ENCODE measurements at regions of chr1 and their contacts with region 1.

Region 1: GRCh38 chr1:179809506-179810366 is 66.6 kb downstream of the FAM163A start:
- DNase-seq: peak; percentile 64
- H3K4me3 Mint-ChIP-seq: no peak overlapping the region
- H3K27ac Mint-ChIP-seq: no peak overlapping the region
- H3K4me1 Mint-ChIP-seq: peaks cover 3% of the 10 kb centered on the region
- H3K27me3 Mint-ChIP-seq: peaks cover 3% of the 10 kb centered on the region

Region 2: DNA sequence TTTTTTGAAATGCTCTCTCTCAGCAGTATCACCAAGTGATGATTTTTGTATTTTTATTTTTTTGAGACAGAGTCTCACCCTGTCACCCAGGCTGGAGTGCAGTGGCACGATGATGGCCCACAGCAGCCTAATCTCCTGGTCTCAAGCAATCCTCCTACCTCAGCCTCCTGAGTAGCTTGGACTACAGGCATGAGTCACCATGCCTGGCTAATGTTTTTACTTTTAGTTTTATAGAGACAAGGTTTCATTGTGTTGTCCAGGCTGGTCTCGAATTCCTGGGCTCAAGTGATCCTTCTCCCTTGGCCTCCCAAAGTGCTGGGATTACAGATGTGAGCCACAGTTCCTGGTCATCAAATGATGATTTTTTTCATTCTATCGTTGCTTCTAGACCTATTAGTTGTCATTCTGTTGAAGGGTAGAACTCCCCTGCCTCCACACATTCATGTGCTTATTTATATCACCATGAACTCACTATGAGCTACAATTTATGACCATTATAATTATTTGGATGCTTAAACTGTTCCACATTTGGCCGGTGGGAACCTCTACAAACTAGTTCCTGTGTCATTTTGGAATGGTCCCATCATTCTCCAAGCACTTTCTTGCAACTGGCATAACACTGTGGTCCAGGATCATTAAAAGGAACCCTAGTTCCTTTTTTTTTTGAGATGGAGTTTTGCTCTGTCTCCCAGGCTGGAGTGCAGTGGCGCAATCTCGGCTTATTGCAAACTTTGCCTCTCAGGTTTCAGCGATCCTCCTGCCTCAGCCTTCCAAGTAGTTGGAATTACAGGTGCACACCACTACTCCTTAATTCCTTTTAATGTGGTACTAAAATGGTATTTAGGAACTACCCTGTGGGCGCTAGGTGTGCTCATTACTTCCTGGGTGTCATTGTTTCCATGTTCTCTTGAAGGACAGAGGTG is 748.1 kb before region 1 on chr1:
- CTCF ChIA-PET with region 1: no interaction called
- POLR2A ChIA-PET with region 1: no interaction called
- DNase-seq: no peak
- H3K4me3 Mint-ChIP-seq: no peak overlapping the region
- H3K27ac Mint-ChIP-seq: no peak overlapping the region
- H3K4me1 Mint-ChIP-seq: no peaks in the 10 kb centered on the region
- H3K27me3 Mint-ChIP-seq: no peaks in the 10 kb centered on the region

Region 3: DNA sequence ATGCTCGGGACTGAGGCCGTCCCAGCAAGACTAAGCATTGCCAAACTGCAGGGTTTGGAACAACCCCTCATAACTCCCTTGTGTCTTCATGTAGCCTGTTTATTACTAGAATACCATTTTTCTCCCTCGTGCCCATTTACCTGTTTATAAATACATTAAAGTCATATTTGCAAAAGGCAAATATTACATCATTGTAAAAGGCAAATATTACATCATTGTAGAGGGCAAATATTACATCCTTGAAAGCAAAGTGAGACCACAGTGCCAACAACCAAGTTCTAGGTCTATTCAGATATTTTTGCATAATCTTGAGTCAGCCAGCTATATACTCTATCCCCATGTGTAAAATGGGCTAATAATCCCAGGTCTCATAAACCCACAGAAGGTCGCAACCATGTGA is 78.1 kb before region 1 on chr1:
- CTCF ChIA-PET with region 1: interaction called, 13 read pairs
- POLR2A ChIA-PET with region 1: no interaction called
- DNase-seq: no peak
- H3K4me3 Mint-ChIP-seq: no peak overlapping the region
- H3K27ac Mint-ChIP-seq: no peak overlapping the region
- H3K4me1 Mint-ChIP-seq: no peaks in the 10 kb centered on the region
- H3K27me3 Mint-ChIP-seq: peaks cover 17% of the 10 kb centered on the region

Region 4: DNA sequence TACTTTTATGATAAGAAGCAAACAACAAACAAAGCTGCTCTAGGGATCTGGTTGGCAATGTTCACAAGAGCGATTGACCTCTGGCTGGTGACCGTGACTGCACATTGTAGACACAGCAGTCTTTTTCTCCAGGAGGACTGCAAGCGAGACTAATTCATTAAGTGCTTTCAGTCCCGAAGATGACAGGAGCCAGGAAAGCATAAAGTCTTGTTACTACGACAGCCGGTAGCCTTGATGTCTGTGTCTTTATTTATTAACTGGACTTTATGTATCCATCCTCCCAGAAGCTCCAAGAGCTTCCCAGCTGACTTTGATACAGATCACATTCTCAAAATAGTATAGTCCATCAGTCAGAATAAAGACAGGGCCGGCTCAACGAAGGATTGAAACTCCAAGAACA is 48.4 kb before region 1 on chr1:
- CTCF ChIA-PET with region 1: interaction called, 16 read pairs
- POLR2A ChIA-PET with region 1: no interaction called
- DNase-seq: no peak
- H3K4me3 Mint-ChIP-seq: no peak overlapping the region
- H3K27ac Mint-ChIP-seq: no peak overlapping the region
- H3K4me1 Mint-ChIP-seq: no peaks in the 10 kb centered on the region
- H3K27me3 Mint-ChIP-seq: peaks cover 9% of the 10 kb centered on the region

Region 5: GRCh38 chr1:179794669-179795068 is 15.1 kb before region 1 on chr1:
- CTCF ChIA-PET with region 1: interaction called, 21 read pairs
- POLR2A ChIA-PET with region 1: no interaction called
- DNase-seq: no peak
- H3K4me3 Mint-ChIP-seq: no peak overlapping the region
- H3K27ac Mint-ChIP-seq: no peak overlapping the region
- H3K4me1 Mint-ChIP-seq: no peaks in the 10 kb centered on the region
- H3K27me3 Mint-ChIP-seq: no peaks in the 10 kb centered on the region

Region 6: DNA sequence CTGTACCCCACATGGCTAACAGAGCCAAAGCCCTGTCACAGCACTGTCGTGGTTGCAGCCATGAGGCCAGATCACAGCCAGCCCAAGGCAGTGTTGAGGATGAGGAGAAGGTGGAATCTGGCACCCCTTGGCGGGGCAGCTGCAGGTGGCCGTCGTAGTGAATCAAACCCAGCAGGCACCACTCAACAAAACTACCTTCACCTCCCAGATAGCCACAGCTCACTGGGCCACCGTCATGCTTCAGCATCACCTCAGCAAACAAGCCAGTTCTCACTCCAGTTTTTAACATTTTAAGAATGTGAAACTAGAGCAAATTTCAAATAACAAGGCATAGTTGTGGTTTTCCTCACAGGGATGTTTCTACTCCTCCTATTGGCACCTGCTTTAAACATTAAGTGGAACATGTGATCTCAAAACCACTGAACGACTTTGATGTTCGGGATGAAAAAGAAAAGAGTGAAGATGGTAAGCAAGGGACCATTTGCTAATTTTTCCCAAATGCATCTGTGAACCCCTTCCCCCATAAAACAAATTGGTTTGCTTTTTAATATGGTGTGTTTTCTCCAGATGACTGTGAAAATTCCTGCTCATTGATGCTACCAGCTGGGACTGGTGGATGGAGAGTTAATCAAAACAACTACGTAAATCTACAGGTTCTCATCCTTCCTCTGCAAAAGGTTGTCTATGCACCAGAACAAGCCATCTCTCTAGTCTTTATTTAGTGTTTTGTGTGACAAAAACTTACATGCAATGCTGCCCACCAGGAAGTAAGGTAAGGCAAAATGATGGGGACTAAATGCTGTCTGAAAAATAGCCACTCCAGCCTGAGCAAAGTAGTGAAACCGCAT is 22.3 kb after region 1 on chr1:
- CTCF ChIA-PET with region 1: interaction called, 33 read pairs
- POLR2A ChIA-PET with region 1: no interaction called
- DNase-seq: no peak
- H3K4me3 Mint-ChIP-seq: no peak overlapping the region
- H3K27ac Mint-ChIP-seq: peak overlapping the region; percentile 8
- H3K4me1 Mint-ChIP-seq: peaks cover 24% of the 10 kb centered on the region
- H3K27me3 Mint-ChIP-seq: no peaks in the 10 kb centered on the region

Region 7: DNA sequence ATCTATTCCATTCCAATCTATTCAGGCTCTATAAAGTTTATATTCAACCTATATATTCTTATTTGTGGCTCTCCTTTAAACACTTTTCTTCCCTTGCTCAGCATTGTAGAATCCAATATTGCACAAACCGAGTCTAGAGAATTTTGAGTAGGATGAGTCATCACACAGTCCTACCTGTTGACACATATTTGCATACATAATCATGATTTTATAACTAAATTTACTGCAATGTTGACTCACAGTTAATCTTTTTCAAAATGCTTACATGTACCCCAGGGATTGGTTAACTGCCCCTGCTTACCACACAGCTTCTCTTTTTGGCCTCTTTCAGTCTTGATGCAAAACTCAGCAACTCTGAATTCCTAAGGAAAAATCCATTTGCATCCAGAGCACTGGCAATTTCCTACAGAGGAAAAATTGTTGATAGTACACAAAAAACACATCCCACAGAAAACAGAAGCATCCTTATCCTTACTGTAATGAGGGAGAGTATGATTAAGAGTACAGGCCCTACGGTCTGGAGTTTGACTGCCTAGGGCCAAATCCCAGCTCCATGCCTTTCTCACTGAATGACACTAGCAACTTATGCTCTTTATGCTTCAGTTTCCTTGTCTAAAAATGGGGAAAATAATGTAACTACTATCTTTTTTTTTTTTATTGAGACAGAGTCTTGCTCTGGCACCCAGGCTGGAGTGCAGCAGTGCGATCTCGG is 116.9 kb after region 1 on chr1:
- CTCF ChIA-PET with region 1: no interaction called
- POLR2A ChIA-PET with region 1: no interaction called
- DNase-seq: no peak
- H3K4me3 Mint-ChIP-seq: no peak overlapping the region
- H3K27ac Mint-ChIP-seq: no peak overlapping the region
- H3K4me1 Mint-ChIP-seq: no peaks in the 10 kb centered on the region
- H3K27me3 Mint-ChIP-seq: peaks cover 2% of the 10 kb centered on the region

Region 8: DNA sequence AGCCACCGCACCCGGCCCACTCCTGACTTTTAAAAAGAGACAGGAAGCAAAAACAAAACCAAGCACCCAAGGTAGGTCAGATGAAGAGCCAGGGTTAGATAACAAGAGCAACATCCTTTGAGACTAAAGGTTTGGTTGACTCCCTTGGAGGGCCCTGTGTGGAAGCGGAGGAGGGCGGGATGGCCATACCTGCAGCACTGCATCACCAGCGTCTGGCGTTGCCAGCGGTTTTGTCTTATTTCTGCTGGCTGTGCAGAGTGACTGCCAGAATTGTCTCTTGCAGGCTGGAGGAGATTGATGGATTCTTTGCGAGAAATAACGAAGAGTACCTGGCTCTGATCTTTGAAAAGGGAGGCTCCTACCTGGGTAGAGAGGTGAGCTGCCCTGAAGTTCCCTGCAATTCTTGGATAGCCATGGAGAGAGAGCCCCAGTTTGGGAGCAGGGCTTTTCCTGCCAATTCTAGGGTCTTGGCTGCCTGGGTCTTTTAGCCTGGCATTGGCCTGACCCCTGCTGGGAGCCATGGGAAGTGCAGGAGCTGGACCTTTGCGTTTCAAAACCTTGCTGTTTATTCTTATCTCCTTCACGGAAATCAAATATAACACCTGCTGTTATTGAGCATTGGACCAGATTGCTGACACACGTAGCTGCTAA is 368.9 kb after region 1 on chr1:
- CTCF ChIA-PET with region 1: interaction called, 35 read pairs
- POLR2A ChIA-PET with region 1: no interaction called
- DNase-seq: peak; percentile 68
- H3K4me3 Mint-ChIP-seq: no peak overlapping the region
- H3K27ac Mint-ChIP-seq: no peak overlapping the region
- H3K4me1 Mint-ChIP-seq: no peaks in the 10 kb centered on the region
- H3K27me3 Mint-ChIP-seq: no peaks in the 10 kb centered on the region

Region 9: GRCh38 chr1:180213401-180214170 is 403.9 kb after region 1 on chr1:
- CTCF ChIA-PET with region 1: no interaction called
- POLR2A ChIA-PET with region 1: no interaction called
- DNase-seq: peak; percentile 62
- H3K4me3 Mint-ChIP-seq: peak overlapping the region; percentile 45
- H3K27ac Mint-ChIP-seq: no peak overlapping the region
- H3K4me1 Mint-ChIP-seq: peaks cover 14% of the 10 kb centered on the region
- H3K27me3 Mint-ChIP-seq: peaks cover 8% of the 10 kb centered on the region

Measured in activated CD4-positive, alpha-beta memory T cell treated with anti-CD3 and anti-CD28 coated beads, Interleukin-2, amount 10 ng/mL, durations not matched to agents 7 days and 5 days (primary cell).